Psoas muscle (tissue), 8 donors: ENCODE measurements at regions of chr4 and their contacts with region 1.

Region 1: GRCh38 chr4:26319467-26319948 is 1.3 kb upstream of the RBPJ start:
- DNase-seq: peak; percentile 96 to 99
- ATAC-seq: peak; percentile 93 to 94 (median 94)
- H3K4me3 ChIP-seq: peak overlapping the region; percentile 76
- H3K27ac ChIP-seq: peak overlapping the region; percentile 83
- H3K4me1 ChIP-seq: peaks cover 17% of the 10 kb centered on the region
- H3K27me3 ChIP-seq: no peaks in the 10 kb centered on the region
- CTCF ChIP-seq: no peak

Region 2: DNA sequence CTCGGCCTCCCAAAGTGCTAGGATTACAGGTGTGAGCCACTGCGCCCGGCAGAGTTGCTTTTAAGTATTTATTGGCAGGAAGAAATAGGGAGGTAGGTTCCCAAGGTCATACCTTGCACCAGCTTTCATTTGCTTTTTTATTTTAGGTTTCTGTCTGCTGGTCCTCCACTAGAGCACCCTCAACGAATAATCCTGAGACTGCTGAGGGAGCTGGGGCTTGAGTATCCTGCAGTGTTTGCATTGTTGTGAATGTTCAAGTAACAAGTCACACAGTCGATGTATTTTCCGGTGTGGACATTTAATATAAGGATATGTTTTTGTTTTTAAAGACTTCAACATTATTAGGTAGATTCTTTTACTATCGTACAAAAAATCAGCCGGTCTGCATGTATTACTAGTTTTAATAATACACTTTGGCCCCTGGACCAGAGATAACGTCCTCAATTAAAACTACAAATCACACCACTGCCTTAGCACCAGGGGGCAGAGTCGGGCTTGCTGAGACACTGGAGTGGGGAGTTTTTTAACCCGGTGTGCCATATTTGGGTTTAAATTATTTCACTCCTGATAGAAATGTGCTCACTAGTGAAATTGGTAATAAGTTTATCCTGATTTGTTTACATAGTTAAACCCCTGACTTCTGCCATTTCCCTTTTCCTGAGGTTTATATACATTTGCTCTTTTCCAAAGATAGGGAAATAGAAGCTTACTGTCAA is 393.9 kb before region 1 on chr4:
- intact Hi-C with region 1: loop called in 1 of 2 experiments (anchors 10 kb)
- DNase-seq: peak in 1 of 2 donors; percentile 23
- ATAC-seq: no peak
- H3K4me3 ChIP-seq: no peak overlapping the region
- H3K27ac ChIP-seq: no peak overlapping the region
- H3K4me1 ChIP-seq: peaks cover 52% of the 10 kb centered on the region
- H3K27me3 ChIP-seq: no peaks in the 10 kb centered on the region
- CTCF ChIP-seq: peak; percentile 44

Region 3: DNA sequence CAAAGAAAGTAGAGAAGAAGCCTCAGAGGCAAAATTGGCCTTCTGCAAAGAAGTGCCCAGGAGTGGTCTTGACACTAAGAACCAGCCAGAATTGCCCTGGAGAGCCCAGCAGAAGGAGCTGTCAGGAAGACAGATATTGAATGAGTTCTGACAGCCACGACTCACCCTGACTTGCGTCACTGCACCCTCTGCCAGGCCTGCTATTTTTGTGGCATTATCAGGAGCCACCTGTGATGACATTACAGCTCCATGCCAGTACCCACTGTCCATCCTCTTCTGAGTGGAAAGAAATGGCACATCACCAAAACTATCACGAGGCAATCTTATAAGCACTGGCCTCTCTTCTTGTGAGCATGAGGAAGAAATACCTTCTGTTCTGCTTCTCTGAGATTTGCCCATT is 337.8 kb before region 1 on chr4:
- intact Hi-C with region 1: loop called (anchors 5 to 10 kb)
- DNase-seq: no peak
- ATAC-seq: peak in 3 of 4 donors; percentile 49 to 83 (median 78)
- H3K4me3 ChIP-seq: no peak overlapping the region
- H3K27ac ChIP-seq: no peak overlapping the region
- H3K4me1 ChIP-seq: no peaks in the 10 kb centered on the region
- H3K27me3 ChIP-seq: no peaks in the 10 kb centered on the region
- CTCF ChIP-seq: no peak

Region 4: GRCh38 chr4:25986807-25987206 is 332.7 kb before region 1 on chr4:
- intact Hi-C with region 1: loop called (anchors 5 to 10 kb)
- DNase-seq: no peak
- ATAC-seq: no peak
- H3K4me3 ChIP-seq: no peak overlapping the region
- H3K27ac ChIP-seq: no peak overlapping the region
- H3K4me1 ChIP-seq: no peaks in the 10 kb centered on the region
- H3K27me3 ChIP-seq: no peaks in the 10 kb centered on the region
- CTCF ChIP-seq: no peak

Region 5: GRCh38 chr4:26081795-26082498 is 237.6 kb before region 1 on chr4:
- intact Hi-C with region 1: loop called (anchors 2 to 5 kb)
- DNase-seq: no peak
- ATAC-seq: peak in 1 of 4 donors; percentile 49
- H3K4me3 ChIP-seq: no peak overlapping the region
- H3K27ac ChIP-seq: no peak overlapping the region
- H3K4me1 ChIP-seq: peaks cover 34% of the 10 kb centered on the region
- H3K27me3 ChIP-seq: no peaks in the 10 kb centered on the region
- CTCF ChIP-seq: peak; percentile 63

Region 6: DNA sequence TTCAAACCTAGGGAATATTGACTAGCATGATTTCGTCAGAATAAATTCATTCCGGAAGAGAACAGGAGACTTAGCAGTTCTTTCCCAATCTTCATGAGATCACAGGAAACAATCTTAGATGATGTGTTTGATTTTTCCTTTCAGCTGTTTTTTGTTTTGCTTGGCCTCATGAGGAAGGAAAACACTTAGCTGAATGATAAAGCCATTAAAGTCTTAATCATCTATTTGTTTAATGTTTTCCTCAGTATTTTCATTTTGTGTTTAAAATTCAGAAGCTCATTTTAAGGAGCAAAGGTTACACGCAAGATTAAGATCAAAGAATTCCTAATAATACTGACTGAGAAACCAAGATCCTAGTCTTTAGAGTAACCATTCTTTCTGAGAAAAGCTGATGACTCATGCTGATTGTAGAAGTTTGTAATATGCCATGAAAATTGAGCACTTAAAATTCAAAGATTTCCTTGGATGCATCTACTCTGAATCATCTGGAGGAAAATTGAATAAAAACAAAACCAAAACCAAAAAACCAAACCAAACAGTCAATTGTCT is 249.0 kb after region 1 on chr4:
- intact Hi-C with region 1: no loop called
- DNase-seq: no peak
- ATAC-seq: no peak
- H3K4me3 ChIP-seq: no peak overlapping the region
- H3K27ac ChIP-seq: no peak overlapping the region
- H3K4me1 ChIP-seq: no peaks in the 10 kb centered on the region
- H3K27me3 ChIP-seq: no peaks in the 10 kb centered on the region
- CTCF ChIP-seq: no peak

Region 7: DNA sequence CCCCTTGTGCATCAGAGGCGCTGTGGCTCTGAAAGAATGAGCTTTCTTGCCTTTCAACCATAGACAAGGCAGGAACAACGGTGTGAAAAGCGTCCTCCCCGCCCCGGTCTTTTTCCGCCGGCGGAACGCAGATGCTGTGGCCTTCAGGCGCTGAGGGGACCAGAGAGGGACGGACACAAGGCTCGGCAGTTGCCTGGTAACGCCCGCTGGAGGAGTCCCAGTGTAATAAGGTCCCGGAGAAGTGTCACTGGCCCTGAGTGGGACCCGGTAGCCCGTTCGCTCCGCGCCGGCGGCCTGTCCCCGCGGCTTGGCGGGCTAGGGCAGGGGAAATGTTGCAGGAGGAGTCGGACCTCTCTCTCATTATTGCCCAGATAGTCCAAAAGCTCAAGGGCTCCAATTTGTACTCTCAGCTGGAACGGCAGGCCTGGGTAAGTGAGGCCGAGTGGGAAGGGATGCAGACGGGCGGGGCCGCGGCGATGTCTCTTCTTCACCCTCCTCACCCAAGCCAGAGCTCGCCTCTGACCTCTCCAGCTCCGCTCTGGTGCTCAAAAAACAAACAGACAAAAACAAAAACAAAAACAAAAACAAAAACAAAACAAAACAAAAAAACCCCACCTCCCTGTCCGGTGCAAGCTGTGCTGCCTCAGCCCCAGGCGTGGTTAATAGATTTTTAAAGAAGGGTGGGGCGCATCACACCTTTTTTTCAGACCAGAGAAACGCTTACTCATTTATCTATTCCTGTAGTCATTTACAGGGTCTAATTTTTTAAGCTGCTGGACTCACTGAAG is 264.6 kb after region 1 on chr4 and contains the start of gene TBC1D19:
- intact Hi-C with region 1: loop called in 1 of 2 experiments (anchors 10 kb)
- DNase-seq: peak; percentile 86 to 91
- ATAC-seq: peak; percentile 99 to 100 (median 100)
- H3K4me3 ChIP-seq: peak within 1 kb of the TSS; percentile 87
- H3K27ac ChIP-seq: peak within 1 kb of the TSS; percentile 67
- H3K4me1 ChIP-seq: peaks cover 5% of the 10 kb centered on the region
- H3K27me3 ChIP-seq: no peaks in the 10 kb centered on the region
- CTCF ChIP-seq: no peak
- total RNA-seq, gene TBC1D19: 3.1 to 6.6 (median 5.4) TPM